Common myeloid progenitor, CD34-positive (primary cell): ENCODE measurements at regions of chr11 and their contacts with region 1.

Region 1: DNA sequence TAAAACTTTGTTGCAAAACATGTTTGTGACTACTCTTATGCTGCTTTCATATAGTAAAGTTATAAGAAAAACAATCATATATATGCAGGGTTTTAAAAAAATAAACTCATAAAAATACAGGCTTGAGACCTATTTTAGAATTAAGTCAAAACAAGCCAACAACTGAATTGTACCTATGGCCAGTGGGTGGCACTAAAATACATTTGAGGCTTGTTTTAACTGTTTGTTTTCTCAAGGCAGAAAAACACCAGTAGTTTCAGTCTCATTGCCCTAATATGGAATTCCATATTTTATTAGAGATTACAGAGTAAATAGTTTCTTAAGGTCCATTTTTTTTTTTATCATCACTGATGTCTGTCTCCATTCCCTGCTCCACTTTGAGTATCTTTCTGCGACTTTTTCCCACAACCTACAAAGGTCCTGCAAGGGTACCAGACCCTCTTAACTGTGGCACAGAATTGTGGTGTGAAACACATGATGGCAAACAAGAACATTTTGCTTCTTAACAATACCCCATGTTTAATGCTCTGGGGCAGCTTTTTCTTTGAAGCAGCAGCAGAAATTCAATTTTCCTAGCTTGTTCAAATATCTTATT is 8.5 kb upstream of the CCDC89 start:
- DNase-seq: peak; percentile 56 to 79 (median 76)
- H3K4me3 ChIP-seq: no peak overlapping the region
- H3K27ac ChIP-seq: no peak overlapping the region
- H3K4me1 ChIP-seq: peaks cover 0 to 2% (median under 1%) of the 10 kb centered on the region in 4 experiments
- H3K27me3 ChIP-seq: no peaks in the 10 kb centered on the region

Region 2: DNA sequence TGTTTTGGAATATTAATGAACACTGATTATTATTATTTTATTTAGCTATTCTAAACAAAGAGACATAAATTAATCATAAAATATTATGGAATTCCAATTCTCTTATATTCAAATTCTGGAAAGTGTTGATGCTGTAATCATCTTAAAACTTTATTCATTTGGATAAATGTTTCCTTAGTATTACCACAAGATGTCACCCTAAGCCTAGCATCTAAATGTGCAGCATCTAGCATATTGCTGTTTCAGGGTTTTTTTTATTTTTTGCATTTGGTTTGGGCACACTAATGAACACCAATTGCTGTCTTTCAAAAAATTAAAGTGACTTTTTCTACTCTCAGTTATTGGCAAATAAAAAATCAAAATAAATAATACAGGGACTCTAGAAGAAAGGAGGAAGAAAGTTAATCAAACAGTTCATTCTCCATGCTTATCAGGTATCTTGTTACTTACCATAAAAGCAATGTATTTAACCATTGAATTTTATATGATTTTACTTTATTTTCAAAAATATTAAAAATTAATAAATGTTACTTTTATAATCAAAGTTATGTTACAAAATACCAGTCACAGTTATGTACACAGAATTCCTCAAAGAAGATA is 99.1 kb before region 1 on chr11:
- CTCF ChIA-PET with region 1: no interaction called
- POLR2A ChIA-PET with region 1: no interaction called
- DNase-seq: peak; percentile 61 to 77 (median 75)
- H3K4me3 ChIP-seq: no peak overlapping the region
- H3K27ac ChIP-seq: no peak overlapping the region
- H3K4me1 ChIP-seq: peaks cover 0 to 3% (median under 1%) of the 10 kb centered on the region in 4 experiments
- H3K27me3 ChIP-seq: no peaks in the 10 kb centered on the region

Region 3: GRCh38 chr11:85682330-85683305 is 11.9 kb before region 1 on chr11:
- CTCF ChIA-PET with region 1: interaction called, 27 read pairs
- POLR2A ChIA-PET with region 1: interaction called, 3 read pairs
- DNase-seq: peak; percentile 58 to 73 (median 70)
- H3K4me3 ChIP-seq: peak overlapping the region; percentile 55 to 92 (median 83)
- H3K27ac ChIP-seq: peak overlapping the region; percentile 62 to 85
- H3K4me1 ChIP-seq: peaks cover 0 to 6% (median 4%) of the 10 kb centered on the region in 4 experiments
- H3K27me3 ChIP-seq: no peaks in the 10 kb centered on the region

Region 4: DNA sequence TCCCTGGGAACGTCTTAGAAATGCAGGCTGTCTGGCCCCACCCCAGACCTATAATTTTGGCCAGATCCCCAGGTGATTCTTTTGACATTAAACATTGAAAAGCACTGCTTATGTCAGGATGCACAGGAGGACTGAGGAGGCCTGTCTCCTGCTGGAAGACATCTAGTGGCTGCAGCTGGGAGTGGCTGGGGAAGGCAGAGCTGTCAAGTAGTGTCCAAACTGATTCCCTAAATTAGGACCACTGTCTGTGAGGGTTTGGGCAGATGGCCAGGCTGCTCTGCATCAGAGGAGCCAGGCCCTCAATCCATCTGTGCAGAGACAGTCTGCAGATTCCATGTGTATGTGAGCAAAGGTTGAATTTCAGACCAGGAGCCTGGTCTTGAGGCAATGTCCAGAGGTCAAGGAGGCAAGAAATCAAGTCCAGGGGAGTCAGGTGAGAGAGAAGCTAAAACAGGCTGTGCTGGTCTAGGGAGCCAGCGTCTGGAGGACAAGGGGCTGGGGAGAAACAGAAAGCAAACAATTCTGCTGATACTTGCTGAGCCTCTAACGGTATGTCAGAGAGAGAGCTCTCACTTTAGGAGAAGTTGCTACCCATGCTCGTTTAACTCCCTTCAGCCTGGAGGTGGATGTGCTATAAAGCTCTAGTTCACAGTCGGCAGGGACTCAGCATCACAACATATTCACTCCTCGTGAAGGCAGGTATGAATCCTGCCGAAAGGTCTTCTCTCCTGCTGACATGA is 131.8 kb after region 1 on chr11:
- CTCF ChIA-PET with region 1: interaction called, 20 read pairs
- POLR2A ChIA-PET with region 1: no interaction called
- DNase-seq: peak; percentile 16 to 30 (median 18)
- H3K4me3 ChIP-seq: no peak overlapping the region
- H3K27ac ChIP-seq: no peak overlapping the region
- H3K4me1 ChIP-seq: peaks cover 0 to 22% (median 9%) of the 10 kb centered on the region in 4 experiments
- H3K27me3 ChIP-seq: no peaks in the 10 kb centered on the region

Region 5: GRCh38 chr11:85854557-85855340 is 160.3 kb after region 1 on chr11:
- CTCF ChIA-PET with region 1: interaction called, 11 read pairs
- POLR2A ChIA-PET with region 1: no interaction called
- DNase-seq: peak; percentile 94 to 98 (median 97)
- H3K4me3 ChIP-seq: peak overlapping the region; percentile 60 to 96 (median 86)
- H3K27ac ChIP-seq: peak overlapping the region; percentile 61 to 82
- H3K4me1 ChIP-seq: peaks cover 3 to 12% (median 8%) of the 10 kb centered on the region in 4 experiments
- H3K27me3 ChIP-seq: no peaks in the 10 kb centered on the region